ENCODE measurements at regions of chr1 and their contacts with region 1.

Region 1: GRCh38 chr1:202009326-202010179 is 834 bp upstream of the ELF3 start:
- DNase-seq: no peak

Region 2: DNA sequence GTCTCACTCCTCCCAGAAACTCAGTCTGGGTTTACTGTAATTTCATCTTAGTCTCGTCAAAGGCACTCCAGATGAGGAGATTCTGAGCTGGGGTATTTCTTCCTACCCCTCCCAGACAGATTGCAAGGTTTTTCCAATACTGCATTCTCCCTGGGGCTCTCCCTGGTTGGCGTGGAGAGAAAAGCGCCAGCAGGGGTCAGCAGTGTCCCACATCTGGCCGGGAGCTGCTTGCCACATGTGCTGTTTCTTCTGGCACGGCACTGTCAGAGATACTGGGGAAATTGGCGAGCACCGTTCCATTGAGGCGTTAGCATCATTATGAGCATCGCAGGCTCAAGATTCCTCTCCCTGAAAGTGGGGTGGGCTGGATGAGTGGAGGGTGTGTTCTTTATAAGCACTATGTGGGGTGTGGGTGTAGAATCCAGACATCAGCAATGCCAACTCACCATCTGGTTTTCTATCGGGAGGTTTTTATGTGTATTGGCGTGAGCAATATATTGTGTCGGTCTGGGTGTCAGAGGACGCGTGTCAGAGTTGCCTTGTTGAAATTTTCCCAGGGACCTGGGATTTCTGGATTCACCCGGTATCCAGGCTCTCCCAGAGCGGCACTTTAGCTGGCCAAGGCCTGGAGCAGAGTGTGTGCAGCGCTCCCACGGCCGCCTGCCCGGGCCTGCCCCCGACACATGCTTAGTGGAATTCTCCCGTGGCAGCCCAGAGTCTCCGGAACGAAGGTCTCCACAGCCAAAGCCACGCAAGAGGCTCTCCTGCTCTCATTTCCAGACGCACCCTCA is 478.6 kb before region 1 on chr1:
- intact Hi-C with region 1: no loop called
- DNase-seq: peak; percentile 97

Region 3: GRCh38 chr1:201982623-201983379 is 26.8 kb before region 1 on chr1 and contains the start of gene RNPEP:
- intact Hi-C with region 1: no loop called
- DNase-seq: peak; percentile 94
- total RNA-seq, gene RNPEP: 29.1 to 38.7 TPM

Region 4: DNA sequence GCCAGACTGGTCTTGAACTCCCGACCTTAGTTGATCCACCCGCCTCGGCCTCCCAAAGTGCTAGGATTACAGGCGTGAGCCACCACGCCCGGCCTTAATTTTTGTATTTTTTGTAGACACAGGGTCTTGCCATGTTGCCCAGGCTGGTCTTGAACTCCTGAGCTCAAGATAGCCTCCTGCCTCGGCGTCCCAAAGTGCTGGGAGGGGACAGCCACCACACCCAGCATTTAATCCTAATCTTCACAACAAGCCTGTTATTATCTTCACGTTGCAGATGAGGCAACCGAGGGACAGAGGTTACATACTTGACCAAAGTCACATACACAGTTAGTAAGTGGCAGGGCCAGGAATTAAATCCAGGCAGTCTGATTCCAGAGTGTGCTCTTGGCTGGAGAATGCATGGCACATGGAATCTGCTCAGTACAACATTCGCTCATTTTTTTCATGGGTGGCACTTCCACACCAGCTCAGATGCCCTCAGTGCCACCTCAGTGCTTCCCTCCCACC is 108.4 kb after region 1 on chr1:
- intact Hi-C with region 1: loop called in 1 of 2 experiments (anchors 5 kb)
- DNase-seq: no peak

Region 5: GRCh38 chr1:202129453-202130296 is 120.1 kb after region 1 on chr1:
- intact Hi-C with region 1: loop called in 1 of 2 experiments (anchors 5 kb)
- DNase-seq: no peak